ENCODE measurements at regions of chr19 and their contacts with region 1.

Region 1: GRCh38 chr19:7522072-7522922 is at the start of gene MCOLN1:
- DNase-seq: peak; percentile 100
- total RNA-seq, gene MCOLN1: 16.0 TPM

Region 2: DNA sequence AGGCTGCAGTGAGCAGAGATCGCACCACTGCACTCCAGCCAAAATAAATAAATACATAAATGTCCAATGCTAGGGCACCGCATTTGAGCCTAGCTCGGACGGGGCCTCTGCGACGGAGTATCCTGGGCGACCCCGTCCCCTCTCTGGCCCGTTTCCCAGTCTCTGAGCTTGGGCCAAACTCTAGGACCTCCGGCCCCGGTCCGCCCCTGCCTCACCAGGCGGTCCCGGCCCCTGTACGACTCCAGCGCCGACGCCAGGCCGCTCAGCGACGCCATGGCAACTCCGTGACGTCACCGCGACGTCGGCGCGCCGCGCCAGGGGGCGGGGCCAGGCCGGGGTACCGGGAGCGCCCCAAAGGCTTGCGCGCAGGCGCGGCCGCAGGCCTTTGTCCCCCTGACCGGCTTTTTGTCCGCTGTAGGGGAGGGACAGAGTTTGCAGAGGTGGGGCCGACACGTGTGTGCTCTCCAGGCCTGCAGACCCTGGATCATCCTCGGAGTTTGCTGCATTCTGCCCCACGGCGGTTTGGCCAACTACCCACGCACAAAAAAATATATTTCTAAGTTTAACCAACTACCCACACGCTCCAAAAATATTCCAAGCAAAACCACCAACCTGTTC is 33.5 kb before region 1 on chr19 and contains the start of gene PEX11G:
- intact Hi-C with region 1: loop called (anchors 5 kb)
- DNase-seq: peak; percentile 98
- total RNA-seq, gene PEX11G: 1.9 TPM

Region 3: GRCh38 chr19:7919610-7920518 is 397.6 kb after region 1 on chr19 and contains the start of gene SNAPC2:
- intact Hi-C with region 1: no loop called
- DNase-seq: peak; percentile 96
- total RNA-seq, gene SNAPC2: 12.3 TPM

Measured in cardiac septum (tissue), 1 donor.